ENCODE measurements at regions of chr4 and their contacts with region 1.

Region 1: GRCh38 chr4:74675673-74676279 is 118.5 kb downstream of the BTC start:
- DNase-seq: peak; percentile 4
- ATAC-seq: no peak
- H3K4me3 Mint-ChIP-seq: no peak overlapping the region
- H3K27ac Mint-ChIP-seq: no peak overlapping the region
- H3K4me1 Mint-ChIP-seq: no peaks in the 10 kb centered on the region
- H3K27me3 Mint-ChIP-seq: peaks cover 8% of the 10 kb centered on the region
- CTCF ChIP-seq: peak; percentile 72

Region 2: GRCh38 chr4:74320559-74321118 is 355.1 kb before region 1 on chr4:
- CTCF ChIA-PET with region 1: interaction called, 15 read pairs
- POLR2A ChIA-PET with region 1: no interaction called
- intact Hi-C with region 1: loop called (anchors 5 kb)
- DNase-seq: peak; percentile 50
- ATAC-seq: peak; percentile 94
- H3K4me3 Mint-ChIP-seq: no peak overlapping the region
- H3K27ac Mint-ChIP-seq: no peak overlapping the region
- H3K4me1 Mint-ChIP-seq: no peaks in the 10 kb centered on the region
- H3K27me3 Mint-ChIP-seq: peaks cover 15% of the 10 kb centered on the region
- CTCF ChIP-seq: peak; percentile 51

Region 3: GRCh38 chr4:74376888-74377483 is 298.8 kb before region 1 on chr4:
- CTCF ChIA-PET with region 1: interaction called, 19 read pairs
- POLR2A ChIA-PET with region 1: no interaction called
- intact Hi-C with region 1: loop called (anchors 5 kb)
- DNase-seq: no peak
- ATAC-seq: no peak
- H3K4me3 Mint-ChIP-seq: no peak overlapping the region
- H3K27ac Mint-ChIP-seq: no peak overlapping the region
- H3K4me1 Mint-ChIP-seq: peaks cover 2% of the 10 kb centered on the region
- H3K27me3 Mint-ChIP-seq: peaks cover 2% of the 10 kb centered on the region
- CTCF ChIP-seq: peak; percentile 67

Region 4: DNA sequence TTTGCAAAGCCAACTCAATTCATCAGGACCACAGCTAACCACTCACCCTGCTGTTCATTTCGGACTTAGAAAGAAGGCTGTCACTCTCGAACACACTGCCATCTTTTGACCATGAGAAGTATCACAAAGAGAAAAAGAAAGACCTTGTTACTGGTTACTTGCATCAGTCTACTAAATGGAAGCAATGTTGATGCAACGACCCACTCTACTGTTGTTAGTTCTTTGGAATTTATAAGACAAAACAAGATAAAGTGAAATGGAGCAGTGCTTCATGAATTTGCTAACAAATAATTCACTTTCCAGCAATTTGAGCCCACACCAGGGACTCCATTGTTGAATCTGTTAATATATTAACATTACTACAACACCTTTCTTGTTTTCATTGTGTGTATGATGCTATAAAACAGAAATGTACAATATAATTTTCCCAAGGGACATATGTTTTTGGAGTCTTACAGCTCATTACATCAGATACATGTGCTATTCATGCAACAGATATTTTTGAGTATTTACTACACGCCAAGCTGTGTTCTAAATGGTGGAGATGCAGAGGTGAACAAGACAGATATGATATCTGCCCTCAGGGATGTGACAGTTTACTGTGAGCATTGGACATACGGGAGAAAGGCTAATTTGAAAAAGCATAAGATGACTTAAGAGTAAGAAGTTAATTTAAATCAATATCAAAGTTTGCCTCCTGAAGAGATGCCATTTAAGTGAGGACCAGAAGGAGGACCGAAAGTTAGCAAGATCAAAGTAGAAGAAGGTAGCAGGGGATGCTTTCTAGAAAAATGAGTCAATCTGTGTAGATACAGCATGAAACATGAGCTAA is 143.6 kb before region 1 on chr4:
- CTCF ChIA-PET with region 1: interaction called, 6 read pairs
- POLR2A ChIA-PET with region 1: no interaction called
- intact Hi-C with region 1: loop called (anchors 10 kb)
- DNase-seq: peak; percentile 11
- ATAC-seq: peak; percentile 47
- H3K4me3 Mint-ChIP-seq: no peak overlapping the region
- H3K27ac Mint-ChIP-seq: no peak overlapping the region
- H3K4me1 Mint-ChIP-seq: no peaks in the 10 kb centered on the region
- H3K27me3 Mint-ChIP-seq: no peaks in the 10 kb centered on the region
- CTCF ChIP-seq: peak; percentile 50

Measured in activated CD8-positive, alpha-beta T cell treated with anti-CD3 and anti-CD28 coated beads for 36 hours (primary cell).